CD8-positive, alpha-beta T cell (primary cell): ENCODE measurements at regions of chr6 and their contacts with region 1.

Region 1: DNA sequence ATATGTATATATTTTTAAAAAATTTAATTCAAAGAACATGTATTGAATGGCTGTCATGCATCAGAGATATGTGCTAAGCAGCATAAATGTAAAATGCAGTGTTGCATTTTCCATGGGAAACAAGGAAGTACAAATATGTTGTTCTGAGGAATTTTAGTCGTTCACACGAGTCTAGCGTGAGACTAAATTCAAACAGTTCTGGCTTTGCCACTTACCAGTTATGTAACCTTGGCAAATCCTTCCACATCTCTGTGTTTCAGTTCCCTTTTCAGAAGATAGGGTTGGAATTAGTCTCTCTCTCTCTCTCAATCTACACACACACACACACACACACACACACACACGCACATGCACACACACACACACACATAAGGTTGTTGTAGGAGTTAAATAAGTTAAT is 305.4 kb downstream of the UTRN start:
- DNase-seq: peak in 1 of 9 experiments; percentile 30
- ATAC-seq: no peak
- H3K4me3 ChIP-seq: no peak overlapping the region
- H3K4me3 Mint-ChIP-seq: no peak overlapping the region
- H3K27ac ChIP-seq: no peak overlapping the region
- H3K27ac Mint-ChIP-seq: no peak overlapping the region
- H3K4me1 ChIP-seq: no peaks in the 10 kb centered on the region
- H3K4me1 Mint-ChIP-seq: peaks cover 2% of the 10 kb centered on the region
- H3K27me3 ChIP-seq: no peaks in the 10 kb centered on the region
- H3K27me3 Mint-ChIP-seq: no peaks in the 10 kb centered on the region
- CTCF ChIP-seq: no peak

Region 2: DNA sequence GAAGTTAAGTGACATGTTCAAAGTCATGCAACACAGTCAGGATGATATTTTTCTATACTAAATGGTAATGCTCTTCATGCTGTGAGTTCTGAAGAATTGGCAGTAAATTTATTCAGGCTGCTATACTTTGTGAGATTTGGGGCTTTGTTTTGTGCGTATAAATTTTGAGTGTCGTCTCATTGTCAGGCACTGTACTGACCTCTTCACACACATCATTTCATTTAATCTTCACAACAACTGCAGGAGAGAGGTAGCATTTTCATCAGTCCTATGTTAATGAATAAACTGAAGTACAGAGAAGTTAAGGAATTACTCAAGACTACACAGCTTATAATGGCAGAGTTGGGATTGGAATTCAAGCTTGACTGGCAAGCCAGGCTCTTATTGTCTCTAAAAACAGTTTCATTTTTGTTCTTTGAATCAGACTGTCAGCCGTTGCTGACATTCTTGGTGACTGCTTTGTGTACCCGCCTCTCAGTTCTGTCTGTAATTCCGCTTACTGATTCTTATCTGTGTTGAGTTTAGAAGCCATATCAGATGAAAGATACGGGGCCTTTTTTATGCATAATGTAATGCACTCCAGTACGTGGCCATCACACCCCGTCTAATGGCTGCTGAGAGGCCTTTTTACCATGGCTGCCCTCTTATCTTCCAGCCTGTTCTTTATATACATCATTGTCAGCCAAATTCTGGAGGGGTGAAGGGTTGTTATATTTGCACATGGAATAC is 30.5 kb before region 1 on chr6:
- CTCF ChIA-PET with region 1: no interaction called
- POLR2A ChIA-PET with region 1: no interaction called
- intact Hi-C with region 1: no loop called
- DNase-seq: peak in 4 of 9 experiments; percentile 4 to 54 (median 42)
- ATAC-seq: peak; percentile 93
- H3K4me3 ChIP-seq: peak overlapping the region in 1 of 2 experiments; percentile 16
- H3K4me3 Mint-ChIP-seq: peak overlapping the region; percentile 61
- H3K27ac ChIP-seq: peak overlapping the region; percentile 4 to 23
- H3K27ac Mint-ChIP-seq: peak overlapping the region; percentile 87
- H3K4me1 ChIP-seq: peaks cover 13% of the 10 kb centered on the region
- H3K4me1 Mint-ChIP-seq: peaks cover 21% of the 10 kb centered on the region
- H3K27me3 ChIP-seq: no peaks in the 10 kb centered on the region
- H3K27me3 Mint-ChIP-seq: no peaks in the 10 kb centered on the region
- CTCF ChIP-seq: no peak

Region 3: GRCh38 chr6:144602523-144603180 is 12.1 kb after region 1 on chr6:
- CTCF ChIA-PET with region 1: interaction called, 5 read pairs
- POLR2A ChIA-PET with region 1: no interaction called
- intact Hi-C with region 1: loop called in 1 of 2 experiments (anchors 1 kb)
- DNase-seq: peak in 3 of 9 experiments; percentile 6 to 45 (median 22)
- ATAC-seq: peak; percentile 62
- H3K4me3 ChIP-seq: no peak overlapping the region
- H3K4me3 Mint-ChIP-seq: no peak overlapping the region
- H3K27ac ChIP-seq: no peak overlapping the region
- H3K27ac Mint-ChIP-seq: no peak overlapping the region
- H3K4me1 ChIP-seq: peaks cover 13% of the 10 kb centered on the region
- H3K4me1 Mint-ChIP-seq: peaks cover 55% of the 10 kb centered on the region
- H3K27me3 ChIP-seq: no peaks in the 10 kb centered on the region
- H3K27me3 Mint-ChIP-seq: no peaks in the 10 kb centered on the region
- CTCF ChIP-seq: no peak

Region 4: DNA sequence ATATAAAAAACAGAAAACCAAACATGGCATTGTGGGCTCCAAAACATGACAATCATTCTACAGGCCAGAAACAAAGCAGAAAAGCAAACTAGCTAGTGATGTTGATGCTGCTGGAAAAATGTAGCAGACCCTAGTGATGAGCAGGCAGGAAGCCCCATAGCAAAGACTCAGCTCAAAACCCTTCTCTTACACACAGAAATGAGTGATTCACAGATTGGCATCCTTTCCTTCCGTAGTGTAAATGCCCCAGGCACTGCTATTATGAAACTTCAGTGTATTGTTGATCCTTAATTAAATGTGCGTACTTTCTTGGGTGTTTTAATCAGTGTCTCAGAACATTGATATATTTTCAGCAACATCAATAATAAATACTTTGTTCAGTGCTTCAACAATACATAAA is 119.7 kb after region 1 on chr6:
- CTCF ChIA-PET with region 1: no interaction called
- POLR2A ChIA-PET with region 1: no interaction called
- intact Hi-C with region 1: loop called (anchors 5 to 10 kb)
- DNase-seq: no peak
- ATAC-seq: no peak
- H3K4me3 ChIP-seq: no peak overlapping the region
- H3K4me3 Mint-ChIP-seq: no peak overlapping the region
- H3K27ac ChIP-seq: no peak overlapping the region
- H3K27ac Mint-ChIP-seq: no peak overlapping the region
- H3K4me1 ChIP-seq: no peaks in the 10 kb centered on the region
- H3K4me1 Mint-ChIP-seq: peaks cover 6% of the 10 kb centered on the region
- H3K27me3 ChIP-seq: no peaks in the 10 kb centered on the region
- H3K27me3 Mint-ChIP-seq: no peaks in the 10 kb centered on the region
- CTCF ChIP-seq: no peak